Mammary epithelial cell (primary cell): ENCODE measurements at regions of chr15 and their contacts with region 1.

Region 1: GRCh38 chr15:56252386-56252785 is 8.7 kb upstream of the RFX7 start:
- DNase-seq: no peak
- H3K4me3 ChIP-seq: no peak overlapping the region
- H3K27ac ChIP-seq: no peak overlapping the region
- H3K4me1 ChIP-seq: no peaks in the 10 kb centered on the region
- H3K27me3 ChIP-seq: no peaks in the 10 kb centered on the region
- CTCF ChIP-seq: no peak

Region 2: GRCh38 chr15:56098195-56098863 is 154.1 kb before region 1 on chr15:
- CTCF ChIA-PET with region 1: no interaction called
- dilution Hi-C with region 1: no loop called
- in situ Hi-C with region 1: no loop called
- intact Hi-C with region 1: no loop called
- DNase-seq: no peak
- H3K4me3 ChIP-seq: no peak overlapping the region
- H3K27ac ChIP-seq: no peak overlapping the region
- H3K4me1 ChIP-seq: no peaks in the 10 kb centered on the region
- H3K27me3 ChIP-seq: no peaks in the 10 kb centered on the region
- CTCF ChIP-seq: no peak

Region 3: DNA sequence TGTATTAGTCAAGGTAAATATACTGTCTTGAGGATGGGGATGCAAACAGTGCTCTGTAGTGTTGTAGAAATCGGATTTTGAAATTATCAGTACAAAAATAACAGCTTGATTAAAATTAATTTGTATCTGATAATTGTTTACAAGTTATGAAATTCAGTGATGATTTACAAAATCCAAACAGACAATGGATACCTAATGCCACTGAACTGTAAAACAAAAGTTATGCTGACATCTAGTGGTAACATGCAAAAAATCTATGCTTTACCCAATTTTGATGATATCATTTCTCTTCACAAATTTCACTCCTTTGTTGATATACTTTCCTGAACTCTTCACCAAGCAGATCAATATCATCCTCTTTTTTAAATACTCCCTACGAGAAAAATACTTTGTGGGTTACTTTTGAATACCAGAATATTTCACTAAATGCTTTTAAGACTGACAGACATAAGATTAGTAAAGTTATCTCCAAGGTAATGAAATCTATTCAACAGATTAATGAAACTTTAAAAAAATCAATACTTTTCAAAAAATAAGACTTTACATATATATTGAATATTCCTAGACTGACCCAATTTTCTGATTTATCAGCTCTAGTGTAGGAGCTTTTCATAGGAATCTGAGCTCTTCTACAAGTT is 176.6 kb after region 1 on chr15:
- CTCF ChIA-PET with region 1: interaction called, 4 read pairs
- dilution Hi-C with region 1: no loop called
- in situ Hi-C with region 1: loop called (anchors 10 kb)
- intact Hi-C with region 1: no loop called
- DNase-seq: peak; percentile 20
- H3K4me3 ChIP-seq: no peak overlapping the region
- H3K27ac ChIP-seq: no peak overlapping the region
- H3K4me1 ChIP-seq: no peaks in the 10 kb centered on the region
- H3K27me3 ChIP-seq: no peaks in the 10 kb centered on the region
- CTCF ChIP-seq: peak; percentile 52 to 59